ENCODE measurements at regions of chr20 and their contacts with region 1.

Region 1: DNA sequence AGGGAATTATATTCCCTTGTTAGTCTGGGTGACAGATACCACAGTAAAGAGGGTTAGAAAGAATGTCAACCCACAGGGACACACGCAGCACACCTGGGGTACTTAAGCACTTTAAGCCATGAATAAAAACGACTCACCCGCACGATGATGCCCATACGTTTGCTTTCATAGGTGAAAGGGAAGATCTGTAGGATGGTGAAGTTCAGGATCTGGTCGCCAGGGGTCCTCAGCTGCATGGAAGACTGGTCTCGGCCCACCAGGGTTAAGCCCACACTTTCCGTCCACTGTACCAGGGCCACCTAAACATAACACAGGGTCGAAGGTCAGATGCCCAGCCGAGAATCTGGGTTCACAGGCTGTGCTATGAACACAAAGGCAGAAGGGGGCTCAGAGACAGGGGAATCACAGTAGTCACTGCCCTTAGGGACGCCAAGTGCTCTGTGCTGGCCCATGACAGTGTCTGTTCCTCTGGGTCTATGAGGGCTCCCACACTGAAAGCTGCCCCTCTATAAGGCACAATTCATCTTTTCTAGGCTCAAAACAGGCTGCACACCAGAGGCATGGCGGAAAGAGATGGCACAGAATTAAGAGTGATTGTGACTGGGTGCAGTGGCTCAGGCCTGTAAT is 96.8 kb upstream of the NFATC2 start:
- DNase-seq: peak in 3 of 4 donors; percentile 49 to 73 (median 51)
- ATAC-seq: peak; percentile 88
- H3K4me3 ChIP-seq: no peak overlapping the region
- H3K27ac ChIP-seq: no peak overlapping the region
- H3K4me1 ChIP-seq: no peaks in the 10 kb centered on the region
- H3K27me3 ChIP-seq: no peaks in the 10 kb centered on the region
- CTCF ChIP-seq: peak; percentile 76 to 80

Region 2: GRCh38 chr20:51029963-51030920 is 609.1 kb before region 1 on chr20:
- intact Hi-C with region 1: no loop called
- DNase-seq: peak in 2 of 4 donors; percentile 10 to 26
- ATAC-seq: peak; percentile 32
- H3K4me3 ChIP-seq: no peak overlapping the region
- H3K27ac ChIP-seq: no peak overlapping the region
- H3K4me1 ChIP-seq: no peaks in the 10 kb centered on the region
- H3K27me3 ChIP-seq: peaks cover 11 to 83% of the 10 kb centered on the region in 2 donors
- CTCF ChIP-seq: no peak

Region 3: DNA sequence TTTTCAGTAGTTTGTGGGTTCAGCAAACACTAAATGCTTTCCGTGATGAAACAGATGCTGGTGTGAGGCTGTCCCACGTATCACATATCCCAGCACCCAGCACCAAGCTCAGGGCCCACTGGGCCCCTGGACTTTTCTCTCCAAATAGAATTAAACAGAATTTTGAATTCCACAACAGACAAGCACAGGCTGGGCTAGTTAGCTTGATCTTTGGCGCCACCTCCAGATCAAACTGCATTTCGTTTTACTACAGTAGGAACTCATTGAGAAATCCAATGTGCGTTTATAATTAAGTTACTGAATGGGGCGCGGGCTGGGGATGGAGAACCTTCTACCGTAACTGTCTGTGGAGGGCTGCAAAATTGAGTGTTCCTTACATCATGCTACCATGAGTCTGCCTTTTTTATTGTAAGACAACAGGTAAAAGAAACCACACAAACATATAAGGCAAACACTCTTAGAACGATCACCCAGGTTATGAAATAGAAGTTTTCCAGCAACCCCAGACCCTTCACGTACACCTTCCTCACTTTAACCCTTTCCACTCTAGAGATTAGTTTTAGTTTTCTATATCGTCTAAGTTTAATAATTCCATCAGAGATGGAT is 444.4 kb after region 1 on chr20:
- intact Hi-C with region 1: loop called in 1 of 2 experiments (anchors 10 kb)
- DNase-seq: peak in 3 of 4 donors; percentile 43 to 82 (median 65)
- ATAC-seq: peak; percentile 82
- H3K4me3 ChIP-seq: no peak overlapping the region
- H3K27ac ChIP-seq: no peak overlapping the region
- H3K4me1 ChIP-seq: no peaks in the 10 kb centered on the region
- H3K27me3 ChIP-seq: no peaks in the 10 kb centered on the region
- CTCF ChIP-seq: peak; percentile 28 to 44